ENCODE measurements at regions of chr1 and their contacts with region 1.

Region 1: GRCh38 chr1:155250633-155251449 is 4.4 kb downstream of the ENTREP3 start:
- DNase-seq: peak; percentile 88 to 97 (median 93)

Region 2: DNA sequence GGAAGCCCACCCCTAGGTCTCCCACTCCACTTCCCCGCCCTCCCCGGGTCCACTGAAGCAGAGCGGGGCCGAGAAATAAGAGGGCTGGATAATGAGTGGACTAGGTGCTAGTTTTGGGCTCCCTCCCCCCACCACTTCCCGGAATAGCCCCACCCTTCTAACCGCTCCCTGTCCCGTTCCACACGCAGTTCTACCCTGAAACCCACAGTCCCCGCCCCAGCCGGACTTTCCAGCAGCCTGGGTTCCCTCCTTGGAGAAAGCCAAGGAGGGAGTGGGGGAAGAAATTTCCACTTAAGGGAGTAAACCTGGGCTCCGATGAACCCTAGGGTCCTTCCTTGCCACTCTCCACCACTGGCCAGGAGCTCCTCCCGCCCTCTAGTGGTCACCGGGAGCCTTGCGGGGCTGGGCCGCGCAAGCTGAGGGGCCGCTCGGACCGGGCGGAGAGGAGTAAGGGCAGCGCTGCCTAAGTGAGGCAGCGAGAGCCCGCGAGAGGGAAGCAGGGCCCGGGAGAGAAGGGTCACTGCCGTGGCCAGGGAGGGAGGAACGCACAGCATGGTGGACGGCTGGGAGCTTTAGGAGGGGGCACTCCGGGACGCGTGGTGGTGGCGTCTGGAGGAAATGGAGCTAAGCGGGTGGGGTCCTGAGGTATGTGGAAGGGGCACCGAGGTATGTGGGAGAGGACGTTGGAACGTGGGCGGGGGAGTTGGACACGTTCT is 57.4 kb before region 1 on chr1:
- intact Hi-C with region 1: no loop called
- DNase-seq: peak in 41 of 42 donors; percentile 44 to 90 (median 79)

Region 3: DNA sequence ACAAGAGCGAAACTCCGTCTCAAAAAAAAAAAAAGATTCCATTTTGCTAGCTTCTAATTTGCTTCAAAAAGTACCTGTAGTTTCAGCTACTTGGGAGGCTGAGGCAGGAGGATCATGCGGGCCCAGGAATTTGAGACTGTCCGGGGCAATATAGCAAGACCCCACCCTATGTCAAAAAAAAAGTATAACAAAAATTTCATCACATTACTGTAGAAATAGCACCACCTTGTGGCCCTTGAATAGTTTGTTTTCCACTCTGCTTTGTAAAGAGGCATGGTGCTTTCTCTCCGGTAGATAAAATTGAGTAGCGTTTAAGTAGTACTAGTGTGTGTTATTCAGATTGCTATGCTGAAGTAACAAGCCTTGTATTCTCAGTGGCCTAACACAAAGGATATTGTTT is 340.9 kb after region 1 on chr1:
- intact Hi-C with region 1: loop called (anchors 10 kb)
- DNase-seq: peak in 11 of 42 donors; percentile 15 to 70 (median 42)